Posterior vena cava (tissue), 2 donors: ENCODE measurements at regions of chr19 and their contacts with region 1.

Region 1: GRCh38 chr19:11387162-11388034 is 3.3 kb upstream of the EPOR start:
- DNase-seq: no peak

Region 2: GRCh38 chr19:9690746-9691145 is 1696.7 kb before region 1 on chr19:
- intact Hi-C with region 1: no loop called
- DNase-seq: no peak

Region 3: GRCh38 chr19:11422163-11423021 is 35.0 kb after region 1 on chr19:
- intact Hi-C with region 1: loop called in 1 of 2 experiments (anchors 5 kb)
- DNase-seq: peak; percentile 95